ENCODE measurements at regions of chr10 and their contacts with region 1.

Region 1: DNA sequence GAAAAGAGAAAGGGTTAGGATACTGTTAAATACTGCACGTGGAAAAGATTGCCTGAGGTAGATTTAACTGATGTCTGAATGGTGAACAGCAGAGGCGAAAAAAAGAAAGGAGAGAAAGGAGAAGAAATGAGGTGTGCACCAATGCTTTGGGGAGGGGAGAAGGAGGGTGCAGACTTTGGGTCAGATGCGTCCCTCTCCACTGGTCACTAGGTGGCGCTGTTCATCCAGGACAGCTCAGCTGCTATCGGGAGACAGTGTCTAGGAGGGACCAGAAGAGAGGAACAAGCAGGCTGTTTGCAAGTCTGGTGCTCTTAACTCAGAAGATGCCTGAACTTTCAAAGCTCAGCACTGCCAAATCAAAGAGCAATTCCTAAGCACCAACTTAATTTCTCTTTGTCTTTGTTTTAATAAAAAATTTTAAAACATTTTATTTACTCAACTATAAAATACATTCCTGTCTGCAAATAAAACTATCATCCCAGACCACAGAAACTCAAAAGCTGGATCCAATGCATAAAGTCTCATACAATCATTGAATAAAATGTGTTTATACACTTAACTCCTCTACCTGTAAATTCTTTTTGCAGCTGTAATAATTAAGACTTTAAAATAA is 83.9 kb upstream of the PDLIM1 start:
- ATAC-seq: peak; percentile 86 to 100 (median 93)
- H3K4me3 ChIP-seq: no peak overlapping the region
- H3K27ac ChIP-seq: no peak overlapping the region
- H3K4me1 ChIP-seq: no peaks in the 10 kb centered on the region

Region 2: GRCh38 chr10:94630017-94630688 is 744.5 kb before region 1 on chr10:
- in situ Hi-C with region 1: loop called in 2 of 9 experiments (anchors 25 kb)
- ATAC-seq: no peak
- H3K4me3 ChIP-seq: no peak overlapping the region
- H3K27ac ChIP-seq: no peak overlapping the region
- H3K4me1 ChIP-seq: no peaks in the 10 kb centered on the region